K562 (cell line): ENCODE measurements at regions of chr17 and their contacts with region 1.

Region 1: DNA sequence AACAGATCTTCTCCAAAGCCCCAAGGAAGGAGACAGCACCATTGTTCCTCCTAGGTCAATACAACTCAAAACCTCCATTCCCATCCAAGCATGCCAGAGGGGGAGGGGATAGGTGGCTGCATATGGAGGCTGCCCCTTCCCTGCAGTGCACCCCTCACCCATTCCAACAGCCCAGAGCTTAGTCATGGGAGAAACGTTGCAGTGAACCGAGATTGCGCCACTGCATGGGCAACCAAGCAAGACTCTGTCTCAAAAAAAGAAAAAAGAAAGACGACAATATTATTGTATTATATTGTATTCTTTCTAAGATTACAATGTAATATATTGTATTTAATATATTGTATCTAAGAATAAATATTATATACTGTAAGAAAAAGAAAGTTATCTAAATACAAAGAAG is 36.4 kb upstream of the CD300E start:
- DNase-seq: no peak
- ATAC-seq: no peak
- H3K4me3 ChIP-seq: no peak overlapping the region
- H3K27ac ChIP-seq: no peak overlapping the region
- H3K4me1 ChIP-seq: no peaks in the 10 kb centered on the region
- H3K27me3 ChIP-seq: peaks cover 8 to 26% of the 10 kb centered on the region in 2 experiments; a peak in 4 of 5 replicates
- CTCF ChIP-seq: no peak
- EP300 ChIP-seq: no peak
- POLR2A ChIP-seq: no peak
- RAD21 ChIP-seq: no peak

Region 2: GRCh38 chr17:74736513-74737298 is 76.8 kb after region 1 on chr17 and contains the start of gene RAB37:
- CTCF ChIA-PET with region 1: interaction called, 15 read pairs
- POLR2A ChIA-PET with region 1: interaction called, 4 read pairs
- in situ Hi-C with region 1: no loop called
- intact Hi-C with region 1: loop called (anchors 1 kb)
- DNase-seq: peak in 2 of 4 experiments; percentile 67
- ATAC-seq: peak; percentile 78
- H3K4me3 ChIP-seq: no peak within 1 kb of the TSS
- H3K27ac ChIP-seq: no peak within 1 kb of the TSS
- H3K4me1 ChIP-seq: peaks cover 0 to 20% of the 10 kb centered on the region in 2 experiments; a peak in 3 of 5 replicates
- H3K27me3 ChIP-seq: peaks cover 31 to 73% of the 10 kb centered on the region in 2 experiments; a peak in 4 of 5 replicates
- CTCF ChIP-seq: peak; percentile 53 to 68 (median 55)
- EP300 ChIP-seq: no peak
- POLR2A ChIP-seq: no peak
- RAD21 ChIP-seq: peak; percentile 80 to 81
- polyA plus RNA-seq, gene RAB37: 0.03 TPM in 1 of 2 experiments, not detected in the other

Region 3: GRCh38 chr17:74780443-74781238 is 120.7 kb after region 1 on chr17:
- CTCF ChIA-PET with region 1: interaction called, 5 read pairs
- POLR2A ChIA-PET with region 1: interaction called, 3 read pairs
- in situ Hi-C with region 1: no loop called
- intact Hi-C with region 1: loop called (anchors 2 kb)
- DNase-seq: peak; percentile 49 to 67 (median 58)
- ATAC-seq: peak; percentile 75
- H3K4me3 ChIP-seq: no peak overlapping the region
- H3K27ac ChIP-seq: no peak overlapping the region
- H3K4me1 ChIP-seq: peaks cover 12 to 20% of the 10 kb centered on the region in 2 experiments; a peak in 4 of 5 replicates
- H3K27me3 ChIP-seq: no peaks in the 10 kb centered on the region
- CTCF ChIP-seq: peak; percentile 69 to 96 (median 92)
- EP300 ChIP-seq: no peak
- POLR2A ChIP-seq: no peak
- RAD21 ChIP-seq: peak; percentile 58 to 75